Activated CD8-positive, alpha-beta T cell treated with anti-CD3 and anti-CD28 coated beads, Interleukin-2, amount 10 ng/mL, durations not matched to agents 7 days and 5 days (primary cell): ENCODE measurements at regions of chr15 and their contacts with region 1.

Region 1: DNA sequence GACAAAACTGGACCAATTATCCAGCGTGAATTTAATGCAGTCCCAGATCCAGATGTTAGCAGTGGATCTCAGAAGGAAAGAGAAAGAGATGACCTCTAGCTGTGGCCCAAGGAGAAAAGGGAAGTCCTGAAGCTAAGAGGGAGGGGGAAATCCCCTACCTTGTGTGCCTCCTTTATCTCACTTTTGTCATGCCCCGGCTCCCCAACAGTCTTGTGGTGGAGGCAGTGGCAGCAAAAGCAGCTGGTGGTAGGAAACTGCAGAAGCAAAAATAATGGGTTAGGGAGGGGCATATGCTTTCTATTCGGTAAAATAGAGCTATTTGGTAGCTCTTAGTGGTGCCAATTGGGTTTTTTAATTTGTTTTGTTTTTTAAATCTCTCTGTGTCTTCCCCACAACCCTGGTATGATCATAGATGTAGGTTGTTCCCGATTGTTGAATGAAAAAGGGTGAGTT is 56.5 kb downstream of the MCTP2 start:
- DNase-seq: peak; percentile 77
- ATAC-seq: peak; percentile 95
- H3K4me3 Mint-ChIP-seq: peak overlapping the region; percentile 66
- H3K27ac Mint-ChIP-seq: peak overlapping the region; percentile 72
- H3K4me1 Mint-ChIP-seq: peaks cover 52% of the 10 kb centered on the region
- H3K27me3 Mint-ChIP-seq: no peaks in the 10 kb centered on the region

Region 2: DNA sequence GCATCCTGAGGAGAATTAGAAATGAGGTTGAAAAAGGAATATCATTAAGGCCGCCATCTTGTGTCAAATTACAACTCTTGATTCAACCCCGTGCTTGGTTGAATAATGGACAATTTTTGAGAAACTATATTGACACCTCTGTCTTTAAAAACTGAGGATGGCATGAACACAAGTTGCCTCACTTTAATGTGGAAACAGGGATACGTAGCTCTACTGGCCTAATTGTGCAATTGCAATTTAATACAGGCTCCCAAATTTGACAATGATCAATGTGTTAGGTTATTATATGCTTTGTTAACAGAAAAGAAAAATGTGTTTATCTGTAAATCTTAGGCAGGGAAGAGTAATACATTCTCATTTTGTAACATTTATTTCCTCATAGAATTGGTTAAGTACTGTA is 133.6 kb before region 1 on chr15:
- CTCF ChIA-PET with region 1: no interaction called
- POLR2A ChIA-PET with region 1: no interaction called
- DNase-seq: no peak
- ATAC-seq: no peak
- H3K4me3 Mint-ChIP-seq: no peak overlapping the region
- H3K27ac Mint-ChIP-seq: no peak overlapping the region
- H3K4me1 Mint-ChIP-seq: no peaks in the 10 kb centered on the region
- H3K27me3 Mint-ChIP-seq: peaks cover 35% of the 10 kb centered on the region

Region 3: DNA sequence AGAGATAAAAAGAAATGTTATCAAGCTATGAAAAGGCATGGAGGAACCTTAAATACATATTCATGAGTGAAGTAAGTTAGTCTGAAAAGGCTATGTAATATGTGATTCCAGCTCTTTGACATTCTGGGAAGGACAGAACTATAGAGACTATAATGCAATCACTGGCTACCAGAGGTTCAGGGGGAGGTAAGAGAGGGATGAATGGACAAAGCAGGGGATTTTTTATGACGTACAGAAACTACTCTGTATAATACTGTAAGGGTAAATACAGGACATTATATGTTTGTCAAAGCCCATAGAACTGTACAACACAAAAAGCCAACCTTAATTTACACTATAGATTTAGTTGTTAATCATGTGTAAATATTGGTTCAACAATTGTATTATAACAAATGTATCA is 10.3 kb before region 1 on chr15:
- CTCF ChIA-PET with region 1: interaction called, 24 read pairs
- POLR2A ChIA-PET with region 1: interaction called, 3 read pairs
- DNase-seq: no peak
- ATAC-seq: no peak
- H3K4me3 Mint-ChIP-seq: no peak overlapping the region
- H3K27ac Mint-ChIP-seq: no peak overlapping the region
- H3K4me1 Mint-ChIP-seq: peaks cover 43% of the 10 kb centered on the region
- H3K27me3 Mint-ChIP-seq: no peaks in the 10 kb centered on the region

Region 4: GRCh38 chr15:94306700-94307650 is 19.2 kb after region 1 on chr15:
- CTCF ChIA-PET with region 1: interaction called, 47 read pairs
- POLR2A ChIA-PET with region 1: interaction called, 22 read pairs
- DNase-seq: peak; percentile 51
- ATAC-seq: peak; percentile 38
- H3K4me3 Mint-ChIP-seq: peak overlapping the region; percentile 37
- H3K27ac Mint-ChIP-seq: peak overlapping the region; percentile 88
- H3K4me1 Mint-ChIP-seq: peaks cover 66% of the 10 kb centered on the region
- H3K27me3 Mint-ChIP-seq: no peaks in the 10 kb centered on the region